Mucosa of descending colon (tissue), 3 donors: ENCODE measurements at regions of chr18 and their contacts with region 1.

Region 1: DNA sequence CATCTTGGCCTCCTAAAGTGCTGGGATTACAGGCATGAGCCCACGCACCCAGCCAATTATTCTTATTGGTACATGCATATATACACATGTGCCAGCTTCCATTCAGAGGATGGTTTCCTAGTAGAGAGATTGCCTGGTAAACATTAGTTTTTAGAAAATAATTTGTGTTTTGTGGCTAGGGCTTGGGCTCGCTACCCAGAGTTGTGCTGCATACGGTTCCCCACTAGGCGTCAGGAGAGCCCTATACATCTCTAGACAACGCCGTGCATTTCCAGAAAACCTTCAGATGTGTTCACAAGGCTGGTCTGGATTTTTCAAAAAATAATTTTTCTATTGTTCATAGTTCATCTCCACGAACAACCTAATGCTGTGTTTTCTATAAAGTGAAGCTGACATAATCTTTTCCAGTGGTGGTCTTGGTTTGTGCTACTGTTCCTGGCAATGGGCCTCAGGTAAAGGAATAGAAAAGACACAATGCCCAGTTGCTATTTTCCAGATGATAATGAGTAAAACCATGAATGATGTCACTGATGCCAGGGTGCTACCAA is 14.7 kb upstream of the AFG3L2 start:
- DNase-seq: peak in 2 of 3 donors; percentile 55 to 76
- ATAC-seq: peak; percentile 65
- H3K4me3 ChIP-seq: no peak overlapping the region
- H3K4me1 ChIP-seq: peaks cover 10% of the 10 kb centered on the region
- CTCF ChIP-seq: peak; percentile 88

Region 2: DNA sequence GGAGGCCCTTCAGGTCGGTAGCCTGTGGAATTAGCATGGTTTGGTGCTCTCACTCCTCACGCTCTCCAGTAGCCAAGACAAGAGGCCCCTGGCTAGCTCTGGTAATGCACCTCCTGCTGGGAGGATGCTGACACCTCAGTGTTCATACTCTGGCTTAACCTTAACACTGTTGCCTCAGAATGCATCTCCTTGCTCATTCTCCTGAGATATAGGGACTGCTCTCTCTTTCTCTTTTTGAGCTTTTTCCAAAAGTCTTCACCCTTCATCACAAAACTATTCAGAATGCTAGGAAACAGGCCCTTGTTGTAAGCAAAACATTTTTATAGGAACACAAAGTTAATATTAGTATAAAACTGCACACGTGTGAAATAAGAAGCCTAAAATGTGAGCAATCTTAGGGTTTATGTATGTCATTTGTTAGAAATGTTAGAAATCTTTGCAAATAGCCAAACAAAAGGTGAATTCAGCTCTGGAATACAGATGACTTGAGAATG is 427.7 kb before region 1 on chr18:
- intact Hi-C with region 1: no loop called
- DNase-seq: no peak
- ATAC-seq: peak; percentile 26
- H3K4me3 ChIP-seq: no peak overlapping the region
- H3K4me1 ChIP-seq: no peaks in the 10 kb centered on the region
- CTCF ChIP-seq: no peak

Region 3: DNA sequence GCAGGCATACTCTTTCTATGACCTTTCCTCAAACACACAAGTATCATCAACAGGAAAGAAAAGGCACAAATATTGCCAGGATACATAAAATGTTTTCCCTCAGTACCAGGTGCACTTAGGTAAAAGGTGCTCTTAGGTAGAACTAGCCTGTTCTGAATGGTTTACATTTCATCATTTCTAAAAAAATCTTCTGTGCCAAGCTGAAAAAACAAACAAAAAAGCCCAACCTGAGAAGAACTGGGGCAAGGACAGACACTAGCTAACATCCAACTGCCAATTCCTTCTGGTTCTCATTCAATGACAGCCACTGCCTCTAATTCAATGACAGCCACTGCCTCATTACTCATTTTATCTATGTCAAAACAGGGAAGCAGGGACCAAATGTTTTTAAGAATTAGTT is 197.8 kb after region 1 on chr18:
- intact Hi-C with region 1: no loop called
- DNase-seq: no peak
- ATAC-seq: no peak
- H3K4me3 ChIP-seq: no peak overlapping the region
- H3K4me1 ChIP-seq: no peaks in the 10 kb centered on the region
- CTCF ChIP-seq: no peak

Region 4: DNA sequence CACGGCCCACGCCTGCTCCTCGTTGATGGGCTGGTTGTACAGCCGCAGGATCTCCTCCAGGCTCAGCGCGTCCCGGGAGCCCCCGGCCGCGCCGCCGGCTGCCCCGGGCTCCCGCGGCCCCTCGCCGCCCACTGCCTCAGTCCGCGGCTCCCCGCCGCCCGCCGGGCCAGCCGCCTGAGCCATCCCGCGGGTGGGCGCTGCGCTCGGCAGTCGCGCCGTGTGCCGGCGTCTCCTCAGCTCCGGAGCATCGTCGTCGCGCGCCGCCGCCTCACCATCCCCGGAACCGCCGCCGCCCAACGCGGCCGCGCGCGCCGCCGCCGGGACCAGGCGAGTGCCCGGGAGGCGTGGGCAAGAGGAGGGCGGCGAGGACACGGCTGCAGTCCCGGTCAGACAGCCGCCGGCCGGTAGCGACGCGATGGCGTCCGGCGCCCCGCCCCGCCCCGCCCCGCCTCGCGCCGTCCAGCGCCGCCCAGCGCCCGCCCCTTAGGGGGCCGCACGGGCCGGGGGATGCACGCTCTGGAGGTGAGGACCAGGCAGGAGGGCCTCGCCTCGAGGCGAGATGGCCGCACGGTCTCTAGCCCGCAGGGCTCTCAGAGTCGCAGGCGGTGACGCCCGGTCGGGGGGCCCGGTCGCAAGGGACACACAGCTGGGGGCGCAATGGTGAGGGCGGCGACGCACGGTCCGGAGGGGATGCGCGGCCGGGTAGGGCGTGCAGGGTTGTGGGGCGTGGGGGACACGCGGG is 266.2 kb after region 1 on chr18 and contains the start of gene SPIRE1:
- intact Hi-C with region 1: loop called (anchors 5 kb)
- DNase-seq: peak; percentile 65 to 81 (median 72)
- ATAC-seq: peak; percentile 92
- H3K4me3 ChIP-seq: peak within 1 kb of the TSS; percentile 42
- H3K4me1 ChIP-seq: no peaks in the 10 kb centered on the region
- CTCF ChIP-seq: no peak
- total RNA-seq, gene SPIRE1: 4.7 to 32.8 (median 5.1) TPM